K562 (cell line): ENCODE measurements at regions of chr1 and their contacts with region 1.

Region 1: DNA sequence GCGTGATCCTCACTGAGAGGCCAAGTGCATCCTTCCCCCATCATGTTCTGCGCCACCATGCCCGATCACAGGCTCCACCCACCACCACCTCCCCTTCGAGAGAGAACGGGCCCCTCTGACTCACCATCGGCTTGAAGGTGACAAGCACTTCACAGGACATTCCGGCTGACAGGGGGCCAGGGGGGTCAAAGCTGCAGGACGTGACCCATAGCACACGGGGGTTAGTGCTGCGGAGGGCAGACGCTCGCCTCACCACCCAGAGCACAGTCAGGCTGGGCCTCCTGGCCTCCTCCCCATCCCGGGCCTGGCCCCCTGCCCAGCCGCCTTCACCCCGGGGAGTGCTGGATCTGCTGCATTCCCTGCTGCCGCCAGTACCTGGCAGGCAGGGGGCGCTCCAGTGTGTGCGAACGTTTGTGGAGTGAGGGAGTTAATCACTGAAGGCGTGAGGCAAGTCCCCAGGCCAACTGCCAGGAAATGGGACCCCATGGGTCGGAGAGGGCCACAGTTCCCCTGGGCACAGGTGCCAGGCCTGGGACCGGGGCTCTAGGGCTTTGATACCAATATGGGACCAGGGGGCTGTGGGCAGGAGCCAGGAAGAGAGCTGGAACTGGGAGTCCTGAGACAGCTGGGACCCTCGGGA is 40.9 kb upstream of the TMEM52 start:
- DNase-seq: peak; percentile 87 to 90 (median 88)
- ATAC-seq: peak; percentile 95
- H3K4me3 ChIP-seq: no peak overlapping the region
- H3K27ac ChIP-seq: no peak overlapping the region
- H3K4me1 ChIP-seq: peaks cover 0 to 32% of the 10 kb centered on the region in 2 experiments; a peak in 3 of 5 replicates
- H3K27me3 ChIP-seq: peaks cover 61 to 86% of the 10 kb centered on the region in 2 experiments
- CTCF ChIP-seq: peak; percentile 93 to 96 (median 95)
- EP300 ChIP-seq: no peak
- POLR2A ChIP-seq: no peak
- RAD21 ChIP-seq: peak; percentile 82 to 97

Region 2: DNA sequence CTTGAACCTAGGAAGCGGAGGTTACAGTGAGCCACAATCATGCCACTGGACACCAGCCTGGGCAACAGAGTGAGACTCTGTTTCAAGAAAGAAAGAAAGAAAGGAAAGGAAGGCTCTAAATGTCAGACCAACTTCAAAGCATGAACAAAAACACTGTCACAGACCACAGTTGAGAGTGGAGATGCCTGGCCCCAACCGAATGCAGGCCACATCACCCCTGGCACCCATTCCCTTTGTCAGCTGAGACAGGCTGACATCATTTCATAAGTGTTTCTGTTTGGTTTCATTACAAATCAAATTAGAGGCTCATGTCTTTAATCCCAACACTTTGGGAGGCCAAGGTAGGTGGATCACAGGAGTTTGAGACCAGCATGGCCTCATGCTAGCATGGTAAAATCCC is 153.1 kb before region 1 on chr1:
- CTCF ChIA-PET with region 1: no interaction called
- POLR2A ChIA-PET with region 1: no interaction called
- in situ Hi-C with region 1: no loop called
- intact Hi-C with region 1: no loop called
- DNase-seq: no peak
- ATAC-seq: no peak
- H3K4me3 ChIP-seq: no peak overlapping the region
- H3K27ac ChIP-seq: no peak overlapping the region
- H3K4me1 ChIP-seq: no peaks in the 10 kb centered on the region
- H3K27me3 ChIP-seq: no peaks in the 10 kb centered on the region
- CTCF ChIP-seq: no peak
- EP300 ChIP-seq: no peak
- POLR2A ChIP-seq: no peak
- RAD21 ChIP-seq: no peak

Region 3: GRCh38 chr1:2037314-2037979 is 77.5 kb after region 1 on chr1:
- CTCF ChIA-PET with region 1: interaction called, 47 read pairs
- POLR2A ChIA-PET with region 1: no interaction called
- in situ Hi-C with region 1: loop called (anchors 5 kb)
- intact Hi-C with region 1: no loop called
- DNase-seq: no peak
- ATAC-seq: peak; percentile 69
- H3K4me3 ChIP-seq: no peak overlapping the region
- H3K27ac ChIP-seq: no peak overlapping the region
- H3K4me1 ChIP-seq: peaks cover 0 to 9% of the 10 kb centered on the region in 2 experiments; a peak in 1 of 5 replicates
- H3K27me3 ChIP-seq: peaks cover 69 to 97% of the 10 kb centered on the region in 2 experiments; a peak in 4 of 5 replicates
- CTCF ChIP-seq: peak in 2 of 3 experiments; percentile 24 to 34; a peak in 2 of 6 replicates
- EP300 ChIP-seq: no peak
- POLR2A ChIP-seq: no peak
- RAD21 ChIP-seq: no peak; a peak in 1 of 4 replicates

Region 4: GRCh38 chr1:2044510-2045319 is 84.8 kb after region 1 on chr1:
- CTCF ChIA-PET with region 1: interaction called, 47 read pairs
- POLR2A ChIA-PET with region 1: interaction called, 5 read pairs
- in situ Hi-C with region 1: loop called (anchors 5 kb)
- intact Hi-C with region 1: loop called (anchors 2 kb)
- DNase-seq: peak; percentile 72 to 94 (median 90)
- ATAC-seq: peak; percentile 84
- H3K4me3 ChIP-seq: no peak overlapping the region
- H3K27ac ChIP-seq: no peak overlapping the region
- H3K4me1 ChIP-seq: peaks cover 0 to 49% of the 10 kb centered on the region in 2 experiments; a peak in 2 of 5 replicates
- H3K27me3 ChIP-seq: peaks cover 33 to 73% of the 10 kb centered on the region in 2 experiments; a peak in 4 of 5 replicates
- CTCF ChIP-seq: peak; percentile 71 to 94 (median 82)
- EP300 ChIP-seq: no peak
- POLR2A ChIP-seq: no peak
- RAD21 ChIP-seq: peak; percentile 65 to 86; a peak in 3 of 4 replicates